ENCODE measurements at regions of chr1 and their contacts with region 1.

Region 1: DNA sequence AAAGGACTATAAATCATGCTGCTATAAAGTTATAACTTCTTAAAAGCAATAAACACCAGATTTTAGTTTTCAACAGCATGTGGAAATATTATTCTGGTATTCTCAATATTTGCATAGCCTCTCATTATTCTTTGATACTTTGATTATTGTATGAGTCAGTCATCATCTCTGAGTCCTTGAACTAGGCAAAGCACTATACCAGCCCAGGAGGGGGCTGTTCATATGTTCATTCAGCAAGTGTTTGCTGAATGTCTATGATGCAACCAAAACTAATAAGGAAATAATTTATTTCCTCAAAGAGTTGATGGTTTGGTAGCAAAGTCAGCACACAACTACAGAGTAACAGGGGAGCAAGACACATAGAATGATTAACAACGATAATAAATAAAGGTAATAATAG is 175.6 kb upstream of the C1orf105 start:
- DNase-seq: no peak
- ATAC-seq: no peak

Region 2: GRCh38 chr1:172266528-172267174 is 21.8 kb after region 1 on chr1:
- intact Hi-C with region 1: loop called (anchors 1 kb)
- DNase-seq: no peak
- ATAC-seq: no peak